Caco-2 (cell line): ENCODE measurements at regions of chr1 and their contacts with region 1.

Region 1: DNA sequence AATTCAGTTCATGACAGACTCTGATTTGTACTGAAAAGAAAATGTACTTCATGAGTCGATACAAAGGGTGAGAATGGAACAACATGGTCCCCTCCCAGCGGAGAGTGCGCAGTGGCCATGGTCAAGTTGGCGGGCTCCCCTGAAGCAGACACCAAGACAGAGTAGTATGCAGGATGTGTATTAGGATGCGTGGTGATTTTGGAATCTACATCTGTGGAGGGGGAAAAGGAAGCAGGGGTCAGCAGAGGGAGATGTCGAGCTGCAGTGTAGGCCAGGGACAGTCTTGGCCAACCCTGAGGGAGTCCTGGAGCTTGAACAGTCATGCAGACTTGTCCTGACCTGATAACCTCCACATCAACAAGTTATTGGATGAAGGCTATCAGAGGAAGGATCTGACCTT is 481.0 kb downstream of the OMA1 start:
- DNase-seq: peak in 1 of 2 experiments; percentile 3
- H3K4me3 ChIP-seq: no peak overlapping the region
- H3K4me3 Mint-ChIP-seq: no peak overlapping the region
- H3K27ac Mint-ChIP-seq: no peak overlapping the region
- H3K4me1 ChIP-seq: no peaks in the 10 kb centered on the region
- H3K4me1 Mint-ChIP-seq: no peaks in the 10 kb centered on the region
- H3K27me3 ChIP-seq: no peaks in the 10 kb centered on the region
- H3K27me3 Mint-ChIP-seq: no peaks in the 10 kb centered on the region
- CTCF ChIP-seq: peak in 1 of 2 experiments; percentile 38

Region 2: GRCh38 chr1:58084266-58084665 is 18.7 kb after region 1 on chr1:
- CTCF ChIA-PET with region 1: no interaction called
- POLR2A ChIA-PET with region 1: no interaction called
- intact Hi-C with region 1: no loop called
- DNase-seq: no peak
- H3K4me3 ChIP-seq: no peak overlapping the region
- H3K4me3 Mint-ChIP-seq: no peak overlapping the region
- H3K27ac Mint-ChIP-seq: no peak overlapping the region
- H3K4me1 ChIP-seq: no peaks in the 10 kb centered on the region
- H3K4me1 Mint-ChIP-seq: no peaks in the 10 kb centered on the region
- H3K27me3 ChIP-seq: no peaks in the 10 kb centered on the region
- H3K27me3 Mint-ChIP-seq: peaks cover 4% of the 10 kb centered on the region
- CTCF ChIP-seq: no peak

Region 3: GRCh38 chr1:58162952-58163550 is 97.5 kb after region 1 on chr1:
- CTCF ChIA-PET with region 1: no interaction called
- POLR2A ChIA-PET with region 1: no interaction called
- intact Hi-C with region 1: loop called (anchors 10 kb)
- DNase-seq: peak; percentile 47 to 52
- H3K4me3 ChIP-seq: no peak overlapping the region
- H3K4me3 Mint-ChIP-seq: no peak overlapping the region
- H3K27ac Mint-ChIP-seq: no peak overlapping the region
- H3K4me1 ChIP-seq: no peaks in the 10 kb centered on the region
- H3K4me1 Mint-ChIP-seq: no peaks in the 10 kb centered on the region
- H3K27me3 ChIP-seq: no peaks in the 10 kb centered on the region
- H3K27me3 Mint-ChIP-seq: no peaks in the 10 kb centered on the region
- CTCF ChIP-seq: peak; percentile 45 to 70